Panc1 (cell line): ENCODE measurements at regions of chr17 and their contacts with region 1.

Region 1: DNA sequence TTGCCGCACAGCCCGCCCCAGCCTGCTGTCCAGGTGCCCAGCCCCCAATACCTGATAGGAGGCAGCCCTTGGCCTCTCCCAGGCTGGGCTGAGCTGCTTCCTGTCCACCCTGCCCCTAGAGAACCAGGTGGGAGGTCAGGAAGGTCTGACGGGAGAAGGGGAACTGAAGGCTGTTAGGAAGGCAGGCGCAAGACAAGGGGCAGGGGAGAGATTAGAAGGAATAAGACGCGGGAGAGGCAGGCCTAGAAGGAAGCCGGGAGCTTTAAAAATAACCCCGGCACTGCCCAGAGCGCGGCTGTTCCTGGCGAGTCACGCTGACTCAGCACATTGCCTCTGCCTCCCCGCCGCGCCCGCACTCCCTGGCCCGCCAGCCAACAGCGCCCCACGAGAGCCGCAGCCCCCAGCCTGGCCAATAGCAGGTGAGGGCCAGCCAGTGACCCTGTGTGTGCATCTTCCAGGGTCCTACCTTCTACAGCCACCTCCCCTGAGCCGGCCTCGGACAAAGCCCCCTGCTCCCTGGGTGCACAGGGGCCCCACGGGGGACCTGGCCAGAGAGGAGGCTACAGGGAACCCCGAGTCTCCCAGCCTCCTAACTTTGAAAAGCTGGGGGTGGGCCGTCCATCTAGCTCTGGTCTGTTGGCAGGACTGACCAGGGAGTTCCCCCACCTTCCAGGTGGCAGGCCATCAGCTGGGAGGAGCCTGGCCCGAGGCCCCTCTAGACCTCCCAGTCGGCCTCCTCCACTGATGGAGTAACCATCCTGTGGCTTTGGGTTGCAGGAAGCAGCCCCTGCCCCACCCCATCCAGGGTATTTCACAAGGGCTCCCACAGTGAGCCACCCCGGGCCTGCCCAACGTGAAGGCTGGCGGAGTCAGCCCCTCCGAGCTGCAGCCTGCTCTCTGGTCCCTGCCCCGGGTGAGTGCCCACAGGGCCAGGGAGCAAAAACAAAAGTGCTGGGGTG is 4.0 kb downstream of the MAFG start:
- DNase-seq: no peak
- ATAC-seq: peak; percentile 17
- H3K4me3 ChIP-seq: peak overlapping the region; percentile 26 to 42
- H3K27ac ChIP-seq: peak overlapping the region; percentile 94
- H3K4me1 ChIP-seq: peaks cover 58% of the 10 kb centered on the region
- H3K27me3 ChIP-seq: no peaks in the 10 kb centered on the region
- CTCF ChIP-seq: no peak

Region 2: GRCh38 chr17:81702971-81703746 is 220.4 kb before region 1 on chr17 and contains the start of gene MRPL12:
- CTCF ChIA-PET with region 1: no interaction called
- POLR2A ChIA-PET with region 1: interaction called, 10 read pairs
- in situ Hi-C with region 1: no loop called
- intact Hi-C with region 1: no loop called
- DNase-seq: no peak
- ATAC-seq: peak; percentile 85
- H3K4me3 ChIP-seq: peak within 1 kb of the TSS; percentile 96 to 98
- H3K27ac ChIP-seq: peak within 1 kb of the TSS; percentile 96
- H3K4me1 ChIP-seq: peaks cover 17% of the 10 kb centered on the region
- H3K27me3 ChIP-seq: no peaks in the 10 kb centered on the region
- CTCF ChIP-seq: no peak
- total RNA-seq, gene MRPL12: 157 TPM

Region 3: DNA sequence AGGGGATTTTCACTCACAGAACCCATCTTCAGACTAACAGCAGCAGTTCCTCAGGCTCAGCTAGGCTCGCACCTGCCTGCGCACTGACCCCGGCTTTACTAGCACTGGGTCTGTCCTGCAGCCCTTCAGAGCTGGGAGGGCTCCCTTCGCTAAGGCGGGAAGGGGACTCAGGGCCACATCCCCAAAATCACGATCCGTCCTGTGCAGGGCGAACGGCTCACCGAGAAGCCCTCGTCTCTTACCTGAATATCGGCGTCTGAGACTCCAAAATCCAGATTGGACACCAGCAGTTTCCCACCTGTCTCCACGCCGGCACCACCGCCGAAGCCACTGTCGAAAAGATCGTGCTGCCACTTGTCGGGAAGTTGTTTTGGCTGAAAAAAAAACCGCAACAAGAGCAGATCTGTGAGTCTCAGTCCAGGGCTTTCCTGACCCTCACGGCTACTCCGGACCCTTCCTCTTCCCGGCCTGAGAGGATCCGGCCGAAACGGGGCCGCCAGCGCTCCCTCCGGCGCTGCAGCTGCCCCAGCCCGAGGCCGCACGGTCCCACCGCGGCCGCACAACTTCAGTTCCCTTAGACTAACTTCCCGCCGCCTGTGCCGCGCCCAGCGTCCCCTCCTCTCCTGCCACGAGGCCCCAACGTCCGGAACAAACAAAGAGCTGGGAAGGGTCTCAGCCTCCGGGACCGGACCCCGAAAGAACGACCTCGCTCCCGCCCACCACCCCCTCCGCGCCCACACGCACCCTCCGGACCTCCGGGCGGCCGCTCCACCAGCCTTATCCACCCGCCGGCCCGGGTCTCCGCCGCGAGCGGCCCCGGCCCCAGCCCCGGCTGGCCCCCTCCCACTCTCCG is 32.9 kb before region 1 on chr17:
- CTCF ChIA-PET with region 1: no interaction called
- POLR2A ChIA-PET with region 1: interaction called, 13 read pairs
- in situ Hi-C with region 1: no loop called
- intact Hi-C with region 1: no loop called
- DNase-seq: no peak
- ATAC-seq: no peak; the same call in 1 of the 2 replicates
- H3K4me3 ChIP-seq: peak overlapping the region; percentile 85 to 95
- H3K27ac ChIP-seq: peak overlapping the region; percentile 90
- H3K4me1 ChIP-seq: peaks cover 9% of the 10 kb centered on the region
- H3K27me3 ChIP-seq: no peaks in the 10 kb centered on the region
- CTCF ChIP-seq: no peak

Region 4: DNA sequence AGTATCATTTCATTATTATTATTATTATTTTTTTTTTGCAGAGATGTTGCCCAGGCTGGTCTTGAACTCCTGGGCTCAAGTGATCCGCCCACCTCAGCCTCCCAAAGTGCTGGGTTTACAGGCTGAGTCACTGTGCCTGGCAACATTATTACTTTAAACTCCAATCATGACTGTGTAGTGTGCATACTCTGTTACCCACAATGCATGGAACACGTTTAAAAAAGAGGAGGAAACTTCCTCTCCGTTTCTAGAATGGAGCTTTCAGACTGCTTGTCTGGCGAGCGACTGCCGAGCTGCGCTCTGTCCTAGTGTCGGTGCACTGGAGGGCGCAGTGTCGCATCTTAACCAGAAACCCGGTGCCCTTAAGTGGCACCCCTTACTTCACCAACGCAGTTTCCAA is 196.6 kb after region 1 on chr17:
- CTCF ChIA-PET with region 1: no interaction called
- POLR2A ChIA-PET with region 1: no interaction called
- in situ Hi-C with region 1: no loop called
- intact Hi-C with region 1: no loop called
- DNase-seq: no peak
- ATAC-seq: peak; percentile 42; the same call in 1 of the 2 replicates
- H3K4me3 ChIP-seq: no peak overlapping the region
- H3K27ac ChIP-seq: no peak overlapping the region
- H3K4me1 ChIP-seq: no peaks in the 10 kb centered on the region
- H3K27me3 ChIP-seq: no peaks in the 10 kb centered on the region
- CTCF ChIP-seq: no peak